HepG2 (cell line): ENCODE measurements at regions of chr5 and their contacts with region 1.

Region 1: DNA sequence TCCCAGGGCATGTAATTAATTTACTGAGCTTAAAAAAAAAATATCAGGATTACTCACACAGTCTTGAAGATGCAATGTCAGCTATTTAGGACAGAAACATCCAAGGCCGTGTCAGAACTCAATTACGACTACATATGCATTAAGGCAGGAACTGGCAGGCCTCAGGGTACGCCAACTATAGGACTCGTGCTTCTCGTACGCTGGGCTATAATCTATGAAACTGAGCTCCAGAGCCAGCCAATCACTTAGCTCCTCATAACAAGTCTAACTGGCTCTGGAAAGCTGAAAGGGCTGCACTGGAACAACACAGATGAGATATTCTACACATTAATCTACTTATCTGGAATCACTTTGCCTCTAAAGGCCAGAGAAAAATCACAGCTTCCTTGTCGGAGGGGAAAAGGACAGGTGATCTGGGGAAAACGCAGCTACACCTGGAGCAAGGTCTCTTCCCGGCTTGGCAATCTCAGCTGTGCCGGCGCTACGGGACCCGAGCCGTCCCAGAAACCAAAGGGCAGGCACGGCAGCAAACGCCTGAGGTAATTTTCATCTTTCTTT is 212.0 kb downstream of the DEPDC1B start:
- DNase-seq: peak; percentile 72
- ATAC-seq: peak; percentile 93
- H3K4me3 ChIP-seq: peak overlapping the region; percentile 54 to 76 (median 74)
- H3K27ac ChIP-seq: peak overlapping the region; percentile 81
- H3K4me1 ChIP-seq: peaks cover 77% of the 10 kb centered on the region
- H3K27me3 ChIP-seq: no peaks in the 10 kb centered on the region
- CTCF ChIP-seq: no peak
- EP300 ChIP-seq: no peak
- POLR2A ChIP-seq: peak in 1 of 2 experiments; percentile 58; a peak in 1 of 4 replicates
- RAD21 ChIP-seq: no peak

Region 2: GRCh38 chr5:60295423-60295822 is 192.5 kb before region 1 on chr5:
- CTCF ChIA-PET with region 1: no interaction called
- POLR2A ChIA-PET with region 1: no interaction called
- in situ Hi-C with region 1: no loop called
- intact Hi-C with region 1: no loop called
- DNase-seq: peak; percentile 31
- ATAC-seq: peak; percentile 92
- H3K4me3 ChIP-seq: no peak overlapping the region
- H3K27ac ChIP-seq: no peak overlapping the region
- H3K4me1 ChIP-seq: peaks cover 4% of the 10 kb centered on the region; the same call in 1 of the 2 replicates
- H3K27me3 ChIP-seq: no peaks in the 10 kb centered on the region
- CTCF ChIP-seq: peak; percentile 86
- EP300 ChIP-seq: no peak
- POLR2A ChIP-seq: no peak
- RAD21 ChIP-seq: peak; percentile 89

Region 3: GRCh38 chr5:60410427-60410826 is 77.5 kb before region 1 on chr5:
- CTCF ChIA-PET with region 1: no interaction called
- POLR2A ChIA-PET with region 1: interaction called, 16 read pairs
- in situ Hi-C with region 1: no loop called
- intact Hi-C with region 1: loop called (anchors 10 kb)
- DNase-seq: peak; percentile 17
- ATAC-seq: no peak
- H3K4me3 ChIP-seq: no peak overlapping the region
- H3K27ac ChIP-seq: no peak overlapping the region
- H3K4me1 ChIP-seq: peaks cover 17% of the 10 kb centered on the region
- H3K27me3 ChIP-seq: no peaks in the 10 kb centered on the region
- CTCF ChIP-seq: no peak
- EP300 ChIP-seq: no peak
- POLR2A ChIP-seq: no peak
- RAD21 ChIP-seq: no peak

Region 4: DNA sequence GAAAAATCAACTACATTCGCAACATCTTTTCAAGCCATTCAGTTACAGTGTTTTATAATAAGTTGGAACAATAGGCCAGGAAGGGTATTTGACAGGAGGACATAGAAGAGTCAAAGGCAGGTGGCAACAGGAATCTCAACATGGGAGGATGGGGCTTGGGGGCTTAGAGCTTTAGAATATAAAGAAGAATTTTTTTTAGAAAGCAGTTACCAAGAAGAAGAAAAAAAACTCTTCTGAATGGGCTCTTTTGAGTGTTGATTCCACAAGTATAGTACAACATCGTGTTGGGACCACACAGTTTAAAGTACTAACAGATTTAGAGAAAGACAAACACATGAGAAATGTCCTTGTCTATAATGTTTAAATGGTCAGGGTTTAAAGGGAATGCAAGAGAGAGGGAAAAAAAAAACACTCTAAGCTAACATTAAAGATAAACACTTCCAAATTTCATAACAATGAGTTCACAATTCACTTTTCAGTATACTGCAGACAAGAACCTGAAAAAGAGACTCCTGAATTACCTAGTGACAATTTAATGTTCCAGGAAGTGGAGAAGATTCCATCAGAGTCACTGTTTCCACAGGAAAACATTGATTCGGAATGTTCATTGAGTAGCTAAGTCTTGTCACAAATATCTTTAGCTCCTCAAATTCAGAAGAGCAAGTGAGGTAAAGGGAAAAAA is 70.3 kb before region 1 on chr5:
- CTCF ChIA-PET with region 1: no interaction called
- POLR2A ChIA-PET with region 1: interaction called, 16 read pairs
- in situ Hi-C with region 1: no loop called
- intact Hi-C with region 1: loop called (anchors 10 kb)
- DNase-seq: peak; percentile 97
- ATAC-seq: peak; percentile 99
- H3K4me3 ChIP-seq: peak overlapping the region in 1 of 3 experiments; percentile 14; a peak in 1 of 6 replicates
- H3K27ac ChIP-seq: peak overlapping the region; percentile 92
- H3K4me1 ChIP-seq: peaks cover 56% of the 10 kb centered on the region
- H3K27me3 ChIP-seq: no peaks in the 10 kb centered on the region
- CTCF ChIP-seq: no peak
- EP300 ChIP-seq: peak in 1 of 2 experiments; percentile 92; a peak in 2 of 4 replicates
- POLR2A ChIP-seq: no peak
- RAD21 ChIP-seq: no peak

Region 5: DNA sequence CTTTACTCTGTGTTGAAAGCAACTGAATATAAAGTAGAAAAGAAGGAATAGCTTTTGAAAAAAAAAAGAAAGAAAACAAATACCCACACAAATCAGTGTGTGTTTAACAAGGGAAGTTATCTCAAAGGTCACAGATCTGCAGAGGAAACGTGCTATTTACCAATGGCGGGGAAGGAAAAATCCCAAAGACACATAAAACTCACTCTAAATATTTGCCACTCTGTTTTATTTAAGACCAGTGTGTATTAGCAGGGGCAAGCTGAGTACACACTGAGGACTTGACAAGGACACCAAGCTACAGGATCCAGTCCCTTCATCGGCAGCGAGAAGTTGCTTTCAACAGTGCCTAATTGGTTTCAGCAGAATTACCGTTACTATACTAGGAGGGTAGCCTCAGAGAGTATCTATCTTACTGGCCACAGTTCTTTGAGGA is 40.5 kb before region 1 on chr5:
- CTCF ChIA-PET with region 1: no interaction called
- POLR2A ChIA-PET with region 1: interaction called, 15 read pairs
- in situ Hi-C with region 1: no loop called
- intact Hi-C with region 1: loop called (anchors 2 kb)
- DNase-seq: peak; percentile 98
- ATAC-seq: peak; percentile 99
- H3K4me3 ChIP-seq: peak overlapping the region in 1 of 3 experiments; percentile 24; a peak in 1 of 6 replicates
- H3K27ac ChIP-seq: peak overlapping the region; percentile 69
- H3K4me1 ChIP-seq: peaks cover 83% of the 10 kb centered on the region
- H3K27me3 ChIP-seq: no peaks in the 10 kb centered on the region
- CTCF ChIP-seq: no peak; the same call in 1 of the 2 replicates
- EP300 ChIP-seq: peak in 1 of 2 experiments; percentile 99; a peak in 2 of 4 replicates
- POLR2A ChIP-seq: no peak; a peak in 1 of 4 replicates
- RAD21 ChIP-seq: no peak

Region 6: GRCh38 chr5:60463179-60463868 is 24.6 kb before region 1 on chr5:
- CTCF ChIA-PET with region 1: no interaction called
- POLR2A ChIA-PET with region 1: interaction called, 19 read pairs
- in situ Hi-C with region 1: no loop called
- intact Hi-C with region 1: no loop called
- DNase-seq: peak; percentile 81
- ATAC-seq: peak; percentile 92
- H3K4me3 ChIP-seq: peak overlapping the region in 1 of 3 experiments; percentile 17; a peak in 1 of 6 replicates
- H3K27ac ChIP-seq: peak overlapping the region; percentile 79
- H3K4me1 ChIP-seq: peaks cover 44% of the 10 kb centered on the region
- H3K27me3 ChIP-seq: no peaks in the 10 kb centered on the region
- CTCF ChIP-seq: no peak
- EP300 ChIP-seq: peak in 1 of 2 experiments; percentile 56; a peak in 2 of 4 replicates
- POLR2A ChIP-seq: no peak
- RAD21 ChIP-seq: no peak

Region 7: DNA sequence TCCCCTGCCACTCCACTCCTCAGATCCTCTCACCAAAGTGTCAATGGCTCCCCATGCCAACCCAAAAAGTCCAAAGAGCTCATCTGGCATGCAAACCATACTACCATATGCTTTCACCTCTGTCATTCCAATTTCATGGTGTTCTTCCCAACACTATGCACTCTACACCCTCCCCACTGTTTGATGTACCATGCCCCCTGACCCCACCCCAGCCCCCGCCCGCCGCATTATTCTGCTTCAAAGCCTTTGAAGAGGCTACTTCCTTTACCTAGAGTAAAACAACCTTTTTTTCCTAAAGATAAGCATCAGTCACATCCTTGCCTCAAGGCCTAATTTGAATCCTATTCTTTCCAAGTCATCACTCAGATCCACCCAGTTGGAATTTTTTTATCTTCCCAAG is 14.3 kb before region 1 on chr5:
- CTCF ChIA-PET with region 1: no interaction called
- POLR2A ChIA-PET with region 1: interaction called, 14 read pairs
- in situ Hi-C with region 1: no loop called
- intact Hi-C with region 1: no loop called
- DNase-seq: peak; percentile 91
- ATAC-seq: peak; percentile 97
- H3K4me3 ChIP-seq: no peak overlapping the region
- H3K27ac ChIP-seq: peak overlapping the region; percentile 51
- H3K4me1 ChIP-seq: peaks cover 43% of the 10 kb centered on the region
- H3K27me3 ChIP-seq: no peaks in the 10 kb centered on the region
- CTCF ChIP-seq: no peak
- EP300 ChIP-seq: peak in 1 of 2 experiments; percentile 84; a peak in 2 of 4 replicates
- POLR2A ChIP-seq: no peak
- RAD21 ChIP-seq: no peak

Region 8: GRCh38 chr5:60514152-60514551 is 26.2 kb after region 1 on chr5:
- CTCF ChIA-PET with region 1: no interaction called
- POLR2A ChIA-PET with region 1: no interaction called
- in situ Hi-C with region 1: no loop called
- intact Hi-C with region 1: no loop called
- DNase-seq: no peak
- ATAC-seq: no peak
- H3K4me3 ChIP-seq: no peak overlapping the region
- H3K27ac ChIP-seq: no peak overlapping the region
- H3K4me1 ChIP-seq: no peaks in the 10 kb centered on the region
- H3K27me3 ChIP-seq: no peaks in the 10 kb centered on the region
- CTCF ChIP-seq: no peak
- EP300 ChIP-seq: no peak
- POLR2A ChIP-seq: no peak
- RAD21 ChIP-seq: no peak

Region 9: DNA sequence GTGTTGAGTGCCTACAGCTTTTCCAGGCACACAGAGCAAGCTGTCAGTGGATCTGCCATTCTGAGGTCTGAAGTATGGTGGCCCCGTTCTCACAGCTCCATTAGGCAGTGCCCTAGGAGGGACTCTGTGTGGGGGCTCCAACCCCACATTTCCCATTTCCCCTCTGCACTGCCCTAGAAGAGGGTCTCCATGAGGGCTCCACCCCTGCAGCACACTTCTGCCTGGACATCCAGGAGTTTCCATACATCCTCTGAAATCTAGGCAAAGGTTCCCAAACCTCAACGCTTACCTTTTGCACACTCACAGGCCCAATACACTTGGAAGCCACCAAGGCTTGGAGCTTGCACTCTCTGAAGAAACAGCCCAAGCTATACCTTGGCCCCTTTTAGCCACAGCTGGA is 80.7 kb after region 1 on chr5:
- CTCF ChIA-PET with region 1: no interaction called
- POLR2A ChIA-PET with region 1: interaction called, 3 read pairs
- in situ Hi-C with region 1: no loop called
- intact Hi-C with region 1: loop called (anchors 10 kb)
- DNase-seq: no peak
- ATAC-seq: no peak
- H3K4me3 ChIP-seq: no peak overlapping the region
- H3K27ac ChIP-seq: no peak overlapping the region
- H3K4me1 ChIP-seq: peaks cover 11% of the 10 kb centered on the region
- H3K27me3 ChIP-seq: no peaks in the 10 kb centered on the region
- CTCF ChIP-seq: no peak
- EP300 ChIP-seq: no peak
- POLR2A ChIP-seq: no peak
- RAD21 ChIP-seq: no peak